GM12878 (cell line): ENCODE measurements at regions of chr12 and their contacts with region 1.

Region 1: DNA sequence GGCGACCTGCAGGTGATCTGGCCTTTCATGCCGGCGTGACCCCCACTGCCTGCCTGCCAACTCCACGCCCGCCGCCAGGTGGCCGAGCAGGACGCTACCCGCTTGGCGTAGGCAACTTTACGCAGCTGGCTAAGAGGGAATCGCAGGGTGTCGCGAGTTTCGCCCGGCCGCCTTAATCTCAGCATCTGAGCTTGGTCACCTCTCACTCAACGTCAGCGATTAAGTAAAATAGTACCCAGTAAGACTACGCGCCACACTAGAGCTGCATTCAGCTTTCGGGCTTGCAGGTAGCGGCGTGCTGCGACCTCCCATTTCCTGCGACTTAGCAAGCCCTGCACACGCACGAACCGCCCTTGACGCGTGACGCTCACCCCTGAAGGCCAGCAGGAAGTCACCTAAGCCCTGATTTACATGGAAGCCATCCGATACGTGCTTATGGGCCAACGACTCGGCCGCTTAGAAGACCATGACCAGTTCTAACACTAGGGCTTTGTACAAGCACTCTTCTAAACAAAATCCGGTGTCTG is 33.2 kb downstream of the WBP11 start:
- DNase-seq: peak; percentile 84
- ATAC-seq: peak; percentile 63
- H3K4me3 ChIP-seq: peak overlapping the region; percentile 83
- H3K27ac ChIP-seq: peak overlapping the region; percentile 99
- H3K4me1 ChIP-seq: peaks cover 2% of the 10 kb centered on the region
- H3K27me3 ChIP-seq: no peaks in the 10 kb centered on the region
- CTCF ChIP-seq: peak; percentile 81 to 87 (median 87)
- EP300 ChIP-seq: peak; percentile 11 to 58; a peak in 3 of 4 replicates
- POLR2A ChIP-seq: peak; percentile 89
- RAD21 ChIP-seq: peak; percentile 37; the same call in 1 of the 2 replicates

Region 2: DNA sequence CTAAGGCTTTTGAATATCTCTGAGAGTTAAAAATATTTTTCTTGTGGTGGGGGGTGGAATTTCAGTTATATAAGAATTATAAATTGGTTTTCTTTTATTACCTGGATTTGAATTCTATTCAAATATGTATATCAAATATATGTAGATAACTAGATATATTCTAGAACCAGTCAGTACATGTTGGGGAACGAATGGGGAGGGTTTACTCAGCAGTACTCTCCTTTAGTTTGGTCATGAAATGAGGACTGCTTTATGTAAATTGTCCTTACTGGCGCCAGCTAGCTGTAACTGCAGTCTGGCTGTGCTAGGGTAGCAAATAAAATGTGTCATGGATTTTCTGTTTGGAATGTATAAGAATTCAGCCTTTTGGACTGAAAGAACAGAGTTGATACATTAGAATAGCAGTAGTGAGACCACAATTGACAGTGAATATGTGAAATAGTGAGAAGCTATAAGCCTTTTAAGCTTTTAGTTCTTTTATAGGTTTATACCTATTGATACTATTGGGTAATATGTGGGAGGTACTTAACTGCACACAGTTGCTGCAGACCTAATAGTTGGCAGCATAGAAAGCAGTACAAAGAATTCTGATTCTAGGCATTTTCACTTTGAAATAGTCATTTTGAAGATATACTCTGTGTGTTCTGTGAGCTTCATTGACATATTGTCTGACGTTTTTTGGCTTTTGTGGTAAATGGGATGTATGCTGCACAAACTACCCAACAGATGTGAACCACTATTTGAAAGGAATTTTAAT is 375.5 kb before region 1 on chr12:
- CTCF ChIA-PET with region 1: interaction called, 4 read pairs
- POLR2A ChIA-PET with region 1: no interaction called
- RAD21 ChIA-PET with region 1: no interaction called
- SMC1A ChIA-PET with region 1: no interaction called
- in situ Hi-C with region 1: no loop called
- intact Hi-C with region 1: loop called (anchors 5 kb)
- DNase-seq: peak; percentile 65
- ATAC-seq: peak; percentile 77
- H3K4me3 ChIP-seq: 0 out of 2 replicates have a peak overlapping the region, but pooled peaks have one; percentile 18
- H3K27ac ChIP-seq: peak overlapping the region; percentile 82
- H3K4me1 ChIP-seq: peaks cover 11% of the 10 kb centered on the region; the same call in 1 of the 2 replicates
- H3K27me3 ChIP-seq: no peaks in the 10 kb centered on the region
- CTCF ChIP-seq: no peak; a peak in 1 of 6 replicates
- EP300 ChIP-seq: no peak
- POLR2A ChIP-seq: 0 out of 2 replicates have a peak, but pooled peaks have one; percentile 22
- RAD21 ChIP-seq: no peak

Region 3: DNA sequence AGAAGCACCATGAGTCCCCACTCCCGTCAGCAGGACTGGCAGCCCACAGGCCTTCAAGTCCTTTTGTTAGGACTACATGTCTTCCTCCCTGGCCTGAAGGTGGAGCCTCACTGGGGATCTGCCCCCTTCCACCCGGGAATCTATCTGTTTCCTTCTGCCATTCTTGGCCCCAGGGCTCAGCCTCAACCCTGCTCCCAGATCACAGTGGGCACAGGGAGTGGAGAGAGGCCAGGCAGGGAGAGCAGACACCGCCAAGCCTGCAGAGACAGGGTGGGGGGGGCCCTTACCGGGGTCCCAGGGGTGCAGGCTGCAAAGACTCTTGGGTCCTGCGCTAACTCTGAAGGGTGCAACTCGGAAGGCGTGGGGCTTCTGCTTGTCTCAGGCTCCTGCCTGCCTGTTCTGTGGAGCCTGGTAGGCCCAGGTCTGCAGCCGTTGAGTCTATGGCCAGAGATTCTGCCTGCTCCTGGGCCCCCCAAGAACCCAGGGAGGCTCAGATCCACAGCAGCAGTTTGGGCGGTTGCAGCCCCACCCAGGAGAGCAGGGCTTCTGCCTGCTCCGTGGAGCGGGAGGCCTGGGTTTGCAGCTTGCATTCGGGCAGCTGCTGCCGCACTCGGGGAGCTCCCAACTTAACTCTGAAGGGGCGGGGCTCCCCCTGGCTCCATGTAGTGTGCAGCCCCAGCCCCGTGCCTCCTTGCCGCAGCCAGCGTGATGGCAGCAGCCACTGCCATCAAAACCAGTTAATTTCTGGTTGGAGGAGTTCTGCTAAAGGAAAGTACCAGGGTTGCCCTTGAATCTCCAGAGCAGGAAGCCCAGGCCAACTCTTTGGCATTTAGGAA is 180.6 kb before region 1 on chr12:
- CTCF ChIA-PET with region 1: no interaction called
- POLR2A ChIA-PET with region 1: no interaction called
- RAD21 ChIA-PET with region 1: no interaction called
- SMC1A ChIA-PET with region 1: no interaction called
- in situ Hi-C with region 1: no loop called
- intact Hi-C with region 1: no loop called
- DNase-seq: no peak
- ATAC-seq: no peak
- H3K4me3 ChIP-seq: no peak overlapping the region
- H3K27ac ChIP-seq: no peak overlapping the region
- H3K4me1 ChIP-seq: no peaks in the 10 kb centered on the region
- H3K27me3 ChIP-seq: no peaks in the 10 kb centered on the region
- CTCF ChIP-seq: no peak
- EP300 ChIP-seq: no peak
- POLR2A ChIP-seq: no peak
- RAD21 ChIP-seq: no peak

Region 4: GRCh38 chr12:14782756-14783155 is 12.7 kb after region 1 on chr12:
- CTCF ChIA-PET with region 1: interaction called, 19 read pairs
- POLR2A ChIA-PET with region 1: interaction called, 7 read pairs
- RAD21 ChIA-PET with region 1: interaction called, 11 read pairs
- SMC1A ChIA-PET with region 1: interaction called, 13 read pairs
- in situ Hi-C with region 1: no loop called
- intact Hi-C with region 1: no loop called
- DNase-seq: no peak
- ATAC-seq: peak; percentile 74
- H3K4me3 ChIP-seq: no peak overlapping the region
- H3K27ac ChIP-seq: no peak overlapping the region
- H3K4me1 ChIP-seq: no peaks in the 10 kb centered on the region
- H3K27me3 ChIP-seq: no peaks in the 10 kb centered on the region
- CTCF ChIP-seq: no peak
- EP300 ChIP-seq: no peak
- POLR2A ChIP-seq: no peak
- RAD21 ChIP-seq: no peak

Region 5: DNA sequence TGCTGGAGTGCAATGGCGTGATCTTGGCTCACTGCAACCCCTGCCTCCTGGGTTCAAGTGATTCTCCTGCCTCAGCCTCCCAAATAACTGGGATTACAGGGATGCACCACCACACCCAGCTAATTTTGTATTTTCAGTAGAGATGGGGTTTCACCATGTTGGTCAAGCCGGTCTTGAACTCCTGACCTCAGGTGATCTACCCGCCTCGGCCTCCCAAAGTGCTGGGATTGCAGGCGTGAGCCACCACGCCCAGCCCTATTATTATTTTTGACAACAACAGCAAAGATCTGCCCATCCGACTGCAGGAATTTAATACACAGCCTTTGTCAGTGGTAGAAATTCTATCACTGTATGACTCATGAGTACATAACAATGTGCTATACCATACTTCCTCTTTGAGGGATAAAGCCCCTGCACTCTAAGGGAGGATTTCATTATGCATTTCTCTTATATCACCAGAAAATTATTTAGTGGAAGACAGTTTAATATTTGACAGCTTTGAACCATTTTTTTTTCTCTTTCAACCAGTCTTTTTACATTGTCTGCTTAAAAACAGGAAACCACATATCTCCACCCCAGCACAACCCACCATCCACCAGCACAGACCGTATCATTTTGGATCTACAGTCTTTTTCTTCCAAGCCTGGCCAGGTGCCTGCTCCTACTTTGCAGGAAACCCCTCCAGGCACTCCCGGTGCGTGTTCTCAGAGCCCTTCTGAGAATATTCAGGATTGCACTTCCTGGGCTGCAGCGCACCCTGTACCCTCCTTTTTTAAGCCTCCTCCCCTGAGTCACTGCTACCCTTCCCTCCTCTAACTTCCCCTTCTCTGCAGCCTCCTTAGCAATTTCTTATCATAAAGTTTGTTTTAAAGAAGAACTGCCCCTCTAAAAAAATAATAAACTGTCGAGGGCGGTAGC is 190.8 kb after region 1 on chr12:
- CTCF ChIA-PET with region 1: interaction called, 5 read pairs
- POLR2A ChIA-PET with region 1: interaction called, 5 read pairs
- RAD21 ChIA-PET with region 1: interaction called, 6 read pairs
- SMC1A ChIA-PET with region 1: interaction called, 4 read pairs
- in situ Hi-C with region 1: loop called (anchors 10 kb)
- intact Hi-C with region 1: loop called (anchors 2 kb)
- DNase-seq: no peak
- ATAC-seq: peak; percentile 61
- H3K4me3 ChIP-seq: peak overlapping the region; percentile 80
- H3K27ac ChIP-seq: peak overlapping the region; percentile 94
- H3K4me1 ChIP-seq: peaks cover 5% of the 10 kb centered on the region
- H3K27me3 ChIP-seq: no peaks in the 10 kb centered on the region
- CTCF ChIP-seq: no peak
- EP300 ChIP-seq: peak; percentile 19 to 51; a peak in 1 of 4 replicates
- POLR2A ChIP-seq: no peak
- RAD21 ChIP-seq: no peak

Region 6: GRCh38 chr12:16636435-16637055 is 1866.5 kb after region 1 on chr12:
- CTCF ChIA-PET with region 1: no interaction called
- POLR2A ChIA-PET with region 1: no interaction called
- RAD21 ChIA-PET with region 1: no interaction called
- SMC1A ChIA-PET with region 1: no interaction called
- in situ Hi-C with region 1: loop called (anchors 25 kb)
- intact Hi-C with region 1: no loop called
- DNase-seq: peak; percentile 51
- ATAC-seq: peak; percentile 96
- H3K4me3 ChIP-seq: 0 out of 2 replicates have a peak overlapping the region, but pooled peaks have one; percentile 43
- H3K27ac ChIP-seq: peak overlapping the region; percentile 40; the same call in 1 of the 2 replicates
- H3K4me1 ChIP-seq: no peaks in the 10 kb centered on the region
- H3K27me3 ChIP-seq: no peaks in the 10 kb centered on the region
- CTCF ChIP-seq: no peak
- EP300 ChIP-seq: peak; percentile 12 to 64; a peak in 2 of 4 replicates
- POLR2A ChIP-seq: no peak
- RAD21 ChIP-seq: no peak